ENCODE measurements at regions of chr15 and their contacts with region 1.

Region 1: GRCh38 chr15:62306851-62307504 is 141.9 kb upstream of the C2CD4B start:
- DNase-seq: peak; percentile 72
- H3K4me3 ChIP-seq: no peak overlapping the region
- H3K27ac ChIP-seq: no peak overlapping the region
- H3K4me1 ChIP-seq: no peaks in the 10 kb centered on the region
- H3K27me3 ChIP-seq: no peaks in the 10 kb centered on the region
- CTCF ChIP-seq: peak; percentile 74

Region 2: GRCh38 chr15:61892140-61892539 is 414.8 kb before region 1 on chr15:
- CTCF ChIA-PET with region 1: no interaction called
- POLR2A ChIA-PET with region 1: no interaction called
- intact Hi-C with region 1: no loop called
- DNase-seq: peak; percentile 38
- H3K4me3 ChIP-seq: no peak overlapping the region
- H3K27ac ChIP-seq: no peak overlapping the region
- H3K4me1 ChIP-seq: no peaks in the 10 kb centered on the region
- H3K27me3 ChIP-seq: no peaks in the 10 kb centered on the region
- CTCF ChIP-seq: no peak

Region 3: GRCh38 chr15:62060113-62060895 is 246.7 kb before region 1 on chr15 and contains the start of gene VPS13C:
- CTCF ChIA-PET with region 1: no interaction called
- POLR2A ChIA-PET with region 1: no interaction called
- intact Hi-C with region 1: loop called (anchors 10 kb)
- DNase-seq: peak; percentile 97
- H3K4me3 ChIP-seq: peak within 1 kb of the TSS; percentile 88
- H3K27ac ChIP-seq: peak within 1 kb of the TSS; percentile 59
- H3K4me1 ChIP-seq: peaks cover 10% of the 10 kb centered on the region
- H3K27me3 ChIP-seq: no peaks in the 10 kb centered on the region
- CTCF ChIP-seq: peak; percentile 74
- total RNA-seq, gene VPS13C: 30.7 and 31.0 TPM in 2 replicates

Region 4: DNA sequence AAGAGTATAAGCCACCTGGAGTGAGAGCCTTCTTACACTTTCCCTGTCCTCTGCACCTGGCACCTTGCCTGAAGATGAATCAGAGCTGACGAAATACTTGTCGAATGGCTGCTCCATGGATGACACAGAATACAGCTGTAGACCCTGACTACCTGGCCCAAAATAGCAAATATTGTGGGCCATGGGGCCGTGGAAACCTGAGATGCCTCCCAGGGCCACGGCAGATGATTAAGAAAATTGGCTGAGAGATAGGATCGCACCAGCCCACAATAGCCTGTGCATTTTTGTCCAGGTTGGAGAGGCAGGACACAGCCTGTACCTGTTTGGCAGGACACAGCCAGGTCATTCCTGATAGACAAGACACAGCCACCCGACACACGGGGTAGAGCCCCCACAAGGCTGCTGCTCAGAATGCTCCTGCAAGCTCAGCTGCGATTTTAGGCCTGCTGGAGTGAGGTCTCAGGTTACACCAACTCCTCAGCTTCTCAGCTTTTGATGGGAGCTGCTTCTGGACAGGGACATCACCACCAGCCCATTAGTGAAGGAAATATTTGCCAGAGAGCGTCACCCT is 712.6 kb after region 1 on chr15:
- CTCF ChIA-PET with region 1: no interaction called
- POLR2A ChIA-PET with region 1: no interaction called
- intact Hi-C with region 1: no loop called
- DNase-seq: no peak
- H3K4me3 ChIP-seq: no peak overlapping the region
- H3K27ac ChIP-seq: no peak overlapping the region
- H3K4me1 ChIP-seq: no peaks in the 10 kb centered on the region
- H3K27me3 ChIP-seq: no peaks in the 10 kb centered on the region
- CTCF ChIP-seq: no peak

Measured in A673 (cell line).